HCT116 (cell line): ENCODE measurements at regions of chr17 and their contacts with region 1.

Region 1: DNA sequence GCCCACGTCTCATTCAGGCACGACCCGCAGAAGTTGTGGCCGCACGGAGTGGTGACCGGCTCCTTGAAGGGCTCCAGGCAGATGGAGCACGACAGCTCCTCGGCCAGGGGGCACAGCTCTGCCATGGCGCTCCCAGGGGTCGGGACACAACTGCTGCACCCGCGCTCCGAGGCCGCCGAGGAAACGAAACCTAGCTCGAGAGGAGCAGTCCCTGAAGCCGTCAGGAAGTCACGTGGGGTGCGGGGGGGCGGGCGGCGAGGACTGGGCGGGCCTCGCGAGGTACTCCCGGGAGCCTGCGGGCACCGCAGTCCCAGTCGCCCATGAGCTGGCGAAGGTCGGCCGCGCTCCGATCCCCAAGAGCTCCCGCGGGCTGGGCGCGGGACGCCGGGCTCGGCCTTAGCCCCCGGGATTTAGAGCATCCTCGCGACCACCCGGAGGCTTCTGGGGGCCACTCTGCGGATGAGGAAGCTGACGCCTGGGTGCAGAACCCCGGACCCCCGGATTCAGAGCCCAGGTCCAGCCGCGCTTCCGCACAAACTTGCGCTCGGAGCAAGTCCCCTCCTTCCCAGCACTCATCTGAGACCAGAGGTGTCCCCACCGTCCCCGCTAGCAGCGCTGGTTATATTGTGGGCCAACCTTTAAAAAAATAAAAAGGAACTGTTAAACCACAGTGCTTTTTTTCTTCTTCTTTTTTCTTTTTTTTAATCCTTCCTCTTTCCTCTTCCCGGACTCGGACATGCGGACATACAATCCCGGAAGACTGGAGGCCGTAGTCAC is at the start of gene TRIM25:
- DNase-seq: peak; percentile 81
- ATAC-seq: peak; percentile 86
- H3K4me3 ChIP-seq: peak within 1 kb of the TSS; percentile 56 to 85
- H3K27ac ChIP-seq: peak within 1 kb of the TSS; percentile 63
- H3K4me1 ChIP-seq: peaks cover 27 to 50% of the 10 kb centered on the region in 2 experiments
- H3K27me3 ChIP-seq: no peaks in the 10 kb centered on the region
- CTCF ChIP-seq: no peak
- POLR2A ChIP-seq: peak; percentile 99
- RAD21 ChIP-seq: no peak
- total RNA-seq, gene TRIM25: 135 TPM

Region 2: DNA sequence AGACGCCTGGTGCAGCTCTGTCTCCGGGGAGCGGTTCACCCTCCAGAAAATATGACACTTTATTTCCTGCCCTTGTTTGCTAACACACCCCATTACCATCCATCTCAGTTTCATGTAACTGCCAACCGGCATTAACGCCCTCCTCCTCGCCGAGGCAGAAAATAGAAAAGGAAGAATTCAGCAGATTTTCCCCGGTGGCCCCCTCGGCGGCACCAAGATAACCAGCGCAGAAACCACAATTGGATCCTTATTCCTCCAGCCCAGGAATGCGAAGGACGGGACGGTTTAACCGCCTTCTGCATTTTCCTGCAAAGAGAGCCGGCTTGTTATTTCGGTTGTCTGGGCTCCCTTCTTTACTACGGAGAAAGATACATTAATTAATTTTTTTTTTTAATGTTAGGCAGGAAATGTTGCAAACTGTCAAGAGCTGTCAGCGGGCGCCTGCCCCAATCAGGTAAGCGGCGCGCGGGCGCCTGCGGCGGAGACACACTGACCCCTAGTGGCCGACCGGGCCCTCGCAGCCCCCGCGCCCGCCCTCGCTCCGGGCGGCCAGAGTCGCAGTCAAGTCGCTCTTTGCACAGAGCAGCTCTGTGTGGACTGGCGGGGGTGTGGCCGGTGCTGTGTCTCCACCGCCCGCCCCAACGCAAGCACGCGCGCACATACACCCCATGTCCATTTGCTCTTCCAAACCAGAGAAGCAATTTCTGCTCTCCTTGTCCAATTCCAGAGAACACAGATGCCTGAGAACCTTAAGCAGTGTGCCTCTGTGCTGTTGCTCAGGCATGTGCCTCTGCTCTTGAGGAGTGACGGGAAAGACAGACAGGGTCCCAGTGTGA is 133.9 kb before region 1 on chr17:
- CTCF ChIA-PET with region 1: no interaction called
- POLR2A ChIA-PET with region 1: interaction called, 20 read pairs
- RAD21 ChIA-PET with region 1: no interaction called
- intact Hi-C with region 1: no loop called
- DNase-seq: peak; percentile 69
- ATAC-seq: peak; percentile 99
- H3K4me3 ChIP-seq: peak overlapping the region; percentile 31 to 49
- H3K27ac ChIP-seq: no peak overlapping the region
- H3K4me1 ChIP-seq: peaks cover 8 to 16% of the 10 kb centered on the region in 2 experiments; a peak in 3 of 4 replicates
- H3K27me3 ChIP-seq: peaks cover 5% of the 10 kb centered on the region; the same call in 1 of the 2 replicates
- CTCF ChIP-seq: peak; percentile 91 to 99 (median 99)
- POLR2A ChIP-seq: no peak
- RAD21 ChIP-seq: peak; percentile 98

Region 3: GRCh38 chr17:56786989-56787482 is 127.0 kb before region 1 on chr17:
- CTCF ChIA-PET with region 1: no interaction called
- POLR2A ChIA-PET with region 1: interaction called, 20 read pairs
- RAD21 ChIA-PET with region 1: no interaction called
- intact Hi-C with region 1: no loop called
- DNase-seq: peak; percentile 90
- ATAC-seq: peak; percentile 94
- H3K4me3 ChIP-seq: peak overlapping the region in 1 of 2 experiments; percentile 8; a peak in 1 of 4 replicates
- H3K27ac ChIP-seq: peak overlapping the region; percentile 16; the same call in 1 of the 2 replicates
- H3K4me1 ChIP-seq: peaks cover 26 to 28% of the 10 kb centered on the region in 2 experiments
- H3K27me3 ChIP-seq: no peaks in the 10 kb centered on the region
- CTCF ChIP-seq: no peak
- POLR2A ChIP-seq: no peak
- RAD21 ChIP-seq: peak; percentile 7; the same call in 1 of the 2 replicates

Region 4: DNA sequence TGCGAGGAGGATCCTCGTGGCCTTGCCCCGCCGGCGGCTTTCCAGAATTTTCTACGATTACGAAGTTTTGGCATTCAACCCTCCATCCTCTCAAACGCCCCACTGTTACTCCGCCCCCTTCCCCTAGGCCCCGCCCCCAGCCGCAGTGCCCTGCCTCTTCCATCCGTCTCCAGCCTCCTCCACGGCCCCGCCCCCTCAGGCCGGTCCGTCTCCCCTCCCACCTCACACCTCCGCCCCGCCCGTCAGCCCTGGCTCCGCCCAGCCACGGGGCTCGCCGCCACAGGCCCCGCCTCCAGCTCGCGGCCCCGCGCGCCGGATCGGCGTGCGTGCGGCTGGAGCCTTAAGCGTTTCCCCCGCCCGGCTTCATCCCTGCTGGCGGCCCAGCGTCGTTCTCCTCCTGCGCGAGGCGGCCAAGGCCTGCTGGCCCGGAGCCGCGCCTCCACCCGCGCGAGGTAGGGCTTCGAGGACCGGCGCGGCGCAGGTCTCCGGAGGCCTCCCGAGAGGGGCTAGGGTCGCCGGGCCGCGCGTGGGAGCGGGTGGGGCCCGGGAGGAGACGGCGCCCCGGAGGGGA is 80.2 kb before region 1 on chr17 and contains the starts of genes C17orf67 and DGKE:
- CTCF ChIA-PET with region 1: no interaction called
- POLR2A ChIA-PET with region 1: interaction called, 7 read pairs
- RAD21 ChIA-PET with region 1: no interaction called
- intact Hi-C with region 1: loop called (anchors 1 kb)
- DNase-seq: peak; percentile 88
- ATAC-seq: peak; percentile 96
- H3K4me3 ChIP-seq: peak within 1 kb of the TSS; percentile 63 to 65
- H3K27ac ChIP-seq: peak within 1 kb of the TSS; percentile 74
- H3K4me1 ChIP-seq: peaks cover 9 to 21% of the 10 kb centered on the region in 2 experiments
- H3K27me3 ChIP-seq: no peaks in the 10 kb centered on the region
- CTCF ChIP-seq: no peak
- POLR2A ChIP-seq: no peak
- RAD21 ChIP-seq: no peak
- total RNA-seq, gene C17orf67: 0.84 TPM
- total RNA-seq, gene DGKE: 5.2 TPM

Region 5: DNA sequence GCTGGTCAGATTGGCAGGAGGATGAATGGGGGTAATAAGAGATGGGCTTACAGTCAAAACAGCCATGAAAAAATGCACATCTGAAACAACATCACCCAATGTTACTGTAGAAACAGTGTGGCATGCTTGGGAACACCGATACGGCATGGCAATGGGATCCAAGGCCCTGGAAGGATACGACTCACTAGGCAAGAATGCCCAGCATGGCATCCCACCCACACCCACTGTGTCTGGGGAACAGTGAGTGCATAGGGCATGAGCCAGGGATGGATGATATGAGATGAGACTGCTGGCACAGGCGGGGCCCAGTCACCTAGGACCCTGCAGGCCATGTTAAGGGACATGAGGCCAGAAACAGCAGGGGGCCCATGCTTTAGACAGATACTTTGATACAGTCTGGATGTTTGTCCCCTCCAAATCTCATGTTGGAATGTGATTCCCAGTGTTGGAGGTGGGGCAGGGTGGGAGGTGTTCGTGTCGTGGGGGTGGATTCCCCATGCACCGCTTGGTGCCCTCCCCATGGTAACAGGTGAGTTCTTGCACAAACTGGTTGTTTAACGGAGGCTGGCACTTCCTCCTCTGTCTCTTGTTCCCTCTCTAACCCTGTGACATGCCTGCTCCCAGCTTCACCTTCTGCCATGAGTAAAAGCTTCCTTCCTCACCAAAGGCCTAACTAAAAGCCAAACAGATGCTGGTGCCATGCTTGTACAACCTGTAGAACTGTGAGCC is 11.5 kb before region 1 on chr17:
- CTCF ChIA-PET with region 1: no interaction called
- POLR2A ChIA-PET with region 1: interaction called, 50 read pairs
- RAD21 ChIA-PET with region 1: no interaction called
- intact Hi-C with region 1: no loop called
- DNase-seq: no peak
- ATAC-seq: peak; percentile 84
- H3K4me3 ChIP-seq: no peak overlapping the region; a peak in 1 of 4 replicates
- H3K27ac ChIP-seq: peak overlapping the region; percentile 26
- H3K4me1 ChIP-seq: peaks cover 14 to 41% of the 10 kb centered on the region in 2 experiments
- H3K27me3 ChIP-seq: no peaks in the 10 kb centered on the region
- CTCF ChIP-seq: no peak
- POLR2A ChIP-seq: no peak
- RAD21 ChIP-seq: no peak

Region 6: GRCh38 chr17:56933868-56934267 is 19.8 kb after region 1 on chr17:
- CTCF ChIA-PET with region 1: no interaction called
- POLR2A ChIA-PET with region 1: interaction called, 10 read pairs
- RAD21 ChIA-PET with region 1: no interaction called
- intact Hi-C with region 1: no loop called
- DNase-seq: no peak
- ATAC-seq: no peak
- H3K4me3 ChIP-seq: no peak overlapping the region
- H3K27ac ChIP-seq: no peak overlapping the region
- H3K4me1 ChIP-seq: peaks cover 4 to 6% of the 10 kb centered on the region in 2 experiments; a peak in 1 of 4 replicates
- H3K27me3 ChIP-seq: no peaks in the 10 kb centered on the region
- CTCF ChIP-seq: no peak
- POLR2A ChIP-seq: no peak
- RAD21 ChIP-seq: no peak

Region 7: GRCh38 chr17:56945938-56946505 is 32.0 kb after region 1 on chr17:
- CTCF ChIA-PET with region 1: no interaction called
- POLR2A ChIA-PET with region 1: no interaction called
- RAD21 ChIA-PET with region 1: no interaction called
- intact Hi-C with region 1: no loop called
- DNase-seq: no peak
- ATAC-seq: no peak
- H3K4me3 ChIP-seq: no peak overlapping the region
- H3K27ac ChIP-seq: no peak overlapping the region
- H3K4me1 ChIP-seq: no peaks in the 10 kb centered on the region
- H3K27me3 ChIP-seq: no peaks in the 10 kb centered on the region
- CTCF ChIP-seq: no peak
- POLR2A ChIP-seq: no peak
- RAD21 ChIP-seq: no peak

Region 8: GRCh38 chr17:56960596-56961538 is 46.8 kb after region 1 on chr17 and contains the start of gene COIL:
- CTCF ChIA-PET with region 1: no interaction called
- POLR2A ChIA-PET with region 1: interaction called, 14 read pairs
- RAD21 ChIA-PET with region 1: no interaction called
- intact Hi-C with region 1: no loop called
- DNase-seq: peak; percentile 93
- ATAC-seq: peak; percentile 91
- H3K4me3 ChIP-seq: peak within 1 kb of the TSS; percentile 70 to 90
- H3K27ac ChIP-seq: peak within 1 kb of the TSS; percentile 88
- H3K4me1 ChIP-seq: peaks cover 7 to 18% of the 10 kb centered on the region in 2 experiments; a peak in 3 of 4 replicates
- H3K27me3 ChIP-seq: no peaks in the 10 kb centered on the region
- CTCF ChIP-seq: peak; percentile 95 to 100 (median 100)
- POLR2A ChIP-seq: peak; percentile 89
- RAD21 ChIP-seq: peak; percentile 83
- total RNA-seq, gene COIL: 31.2 TPM